Activated CD8-positive, alpha-beta T cell treated with anti-CD3 and anti-CD28 coated beads for 36 hours (primary cell): ENCODE measurements at regions of chr2 and their contacts with region 1.

Region 1: GRCh38 chr2:74919827-74920226 is 38.6 kb upstream of the POLE4 start:
- DNase-seq: peak; percentile 78
- ATAC-seq: peak; percentile 75
- H3K4me3 Mint-ChIP-seq: peak overlapping the region; percentile 37
- H3K27ac Mint-ChIP-seq: no peak overlapping the region
- H3K4me1 Mint-ChIP-seq: peaks cover 10% of the 10 kb centered on the region
- H3K27me3 Mint-ChIP-seq: peaks cover 20% of the 10 kb centered on the region
- CTCF ChIP-seq: peak; percentile 98

Region 2: GRCh38 chr2:74908748-74909444 is 10.9 kb before region 1 on chr2:
- CTCF ChIA-PET with region 1: interaction called, 11 read pairs
- POLR2A ChIA-PET with region 1: no interaction called
- intact Hi-C with region 1: no loop called
- DNase-seq: no peak
- ATAC-seq: no peak
- H3K4me3 Mint-ChIP-seq: no peak overlapping the region
- H3K27ac Mint-ChIP-seq: no peak overlapping the region
- H3K4me1 Mint-ChIP-seq: peaks cover 7% of the 10 kb centered on the region
- H3K27me3 Mint-ChIP-seq: peaks cover 34% of the 10 kb centered on the region
- CTCF ChIP-seq: no peak

Region 3: DNA sequence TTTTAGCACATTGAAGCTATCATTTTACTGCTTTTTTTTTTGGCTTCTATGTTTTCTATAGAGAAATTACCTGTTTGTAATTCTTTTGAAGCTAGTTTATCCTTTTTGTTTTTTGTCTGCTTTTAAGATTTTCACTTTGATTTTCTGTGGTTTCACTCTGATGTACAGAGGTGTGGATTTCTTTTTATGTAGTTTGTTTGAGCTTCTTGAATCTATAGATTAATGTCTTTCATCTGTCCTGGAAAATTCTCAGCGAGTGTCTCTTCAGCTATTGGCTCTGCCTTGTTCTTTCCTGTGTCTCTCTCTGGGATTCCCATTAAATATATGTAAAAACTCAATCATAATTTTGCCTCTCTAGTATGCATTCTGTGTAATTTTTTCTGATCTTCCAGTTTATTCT is 47.1 kb after region 1 on chr2:
- CTCF ChIA-PET with region 1: no interaction called
- POLR2A ChIA-PET with region 1: no interaction called
- intact Hi-C with region 1: no loop called
- DNase-seq: no peak
- ATAC-seq: no peak
- H3K4me3 Mint-ChIP-seq: no peak overlapping the region
- H3K27ac Mint-ChIP-seq: peak overlapping the region; percentile 37
- H3K4me1 Mint-ChIP-seq: peaks cover 26% of the 10 kb centered on the region
- H3K27me3 Mint-ChIP-seq: no peaks in the 10 kb centered on the region
- CTCF ChIP-seq: no peak

Region 4: GRCh38 chr2:75035444-75036353 is 115.9 kb after region 1 on chr2:
- CTCF ChIA-PET with region 1: no interaction called
- POLR2A ChIA-PET with region 1: no interaction called
- intact Hi-C with region 1: no loop called
- DNase-seq: no peak
- ATAC-seq: no peak
- H3K4me3 Mint-ChIP-seq: no peak overlapping the region
- H3K27ac Mint-ChIP-seq: no peak overlapping the region
- H3K4me1 Mint-ChIP-seq: no peaks in the 10 kb centered on the region
- H3K27me3 Mint-ChIP-seq: no peaks in the 10 kb centered on the region
- CTCF ChIP-seq: no peak

Region 5: DNA sequence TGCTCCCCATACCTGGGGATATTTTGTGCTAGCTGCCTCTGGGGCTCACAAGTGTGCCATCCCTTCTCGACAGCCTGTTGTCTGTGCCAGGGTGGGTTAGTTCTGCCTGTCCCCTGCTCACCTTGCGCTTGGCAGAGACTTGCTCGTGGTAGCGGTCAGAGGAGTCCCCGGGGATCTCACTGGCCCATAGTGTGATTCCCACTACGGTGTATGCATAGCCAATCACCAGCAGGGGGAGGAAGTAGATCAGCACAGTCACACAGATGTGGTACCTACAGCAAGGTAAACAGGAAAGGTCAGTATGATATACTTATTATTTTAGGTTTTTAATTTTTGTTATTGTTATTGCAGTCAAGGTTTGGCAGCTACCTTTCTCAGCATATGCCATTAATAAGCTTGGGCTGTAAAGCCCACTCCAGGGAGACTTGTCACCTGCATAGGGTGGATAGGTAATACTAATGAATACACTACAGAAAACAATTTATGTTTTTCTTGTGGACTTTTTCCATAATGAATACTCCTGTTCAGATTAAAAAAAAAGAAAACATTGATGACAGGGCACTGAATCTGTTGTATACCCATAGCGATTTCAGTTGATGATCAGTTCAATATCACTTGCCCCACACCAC is 133.8 kb after region 1 on chr2:
- CTCF ChIA-PET with region 1: interaction called, 4 read pairs
- POLR2A ChIA-PET with region 1: no interaction called
- intact Hi-C with region 1: loop called (anchors 10 kb)
- DNase-seq: peak; percentile 10
- ATAC-seq: peak; percentile 60
- H3K4me3 Mint-ChIP-seq: no peak overlapping the region
- H3K27ac Mint-ChIP-seq: no peak overlapping the region
- H3K4me1 Mint-ChIP-seq: no peaks in the 10 kb centered on the region
- H3K27me3 Mint-ChIP-seq: no peaks in the 10 kb centered on the region
- CTCF ChIP-seq: peak; percentile 54

Region 6: GRCh38 chr2:75403991-75404428 is 484.2 kb after region 1 on chr2:
- CTCF ChIA-PET with region 1: interaction called, 9 read pairs
- POLR2A ChIA-PET with region 1: no interaction called
- intact Hi-C with region 1: loop called (anchors 2 kb)
- DNase-seq: no peak
- ATAC-seq: peak; percentile 87
- H3K4me3 Mint-ChIP-seq: no peak overlapping the region
- H3K27ac Mint-ChIP-seq: no peak overlapping the region
- H3K4me1 Mint-ChIP-seq: peaks cover 23% of the 10 kb centered on the region
- H3K27me3 Mint-ChIP-seq: no peaks in the 10 kb centered on the region
- CTCF ChIP-seq: peak; percentile 86